ENCODE measurements at regions of chr3 and their contacts with region 1.

Region 1: DNA sequence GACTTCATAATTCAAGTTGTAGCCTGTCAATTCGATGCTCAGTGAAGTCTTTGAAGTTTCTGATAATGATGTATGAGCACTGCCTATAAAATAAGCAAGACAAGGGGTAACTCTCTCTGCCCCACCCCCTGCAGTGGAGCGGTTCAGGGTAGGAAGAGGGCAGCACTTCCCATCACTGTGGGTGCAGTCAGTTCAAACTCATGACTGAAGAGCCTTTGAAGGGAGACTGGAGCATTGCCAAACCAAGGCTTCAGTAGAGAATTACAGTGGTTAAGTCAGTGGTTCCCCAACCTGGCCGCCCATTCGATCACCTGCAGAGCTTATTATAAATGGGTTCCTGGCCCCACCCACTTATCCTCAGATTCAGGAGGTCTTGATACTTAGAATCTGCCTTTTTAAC is 190.6 kb downstream of the SHQ1 start:
- DNase-seq: no peak
- H3K4me3 ChIP-seq: no peak overlapping the region
- CTCF ChIP-seq: no peak
- POLR2A ChIP-seq: no peak

Region 2: DNA sequence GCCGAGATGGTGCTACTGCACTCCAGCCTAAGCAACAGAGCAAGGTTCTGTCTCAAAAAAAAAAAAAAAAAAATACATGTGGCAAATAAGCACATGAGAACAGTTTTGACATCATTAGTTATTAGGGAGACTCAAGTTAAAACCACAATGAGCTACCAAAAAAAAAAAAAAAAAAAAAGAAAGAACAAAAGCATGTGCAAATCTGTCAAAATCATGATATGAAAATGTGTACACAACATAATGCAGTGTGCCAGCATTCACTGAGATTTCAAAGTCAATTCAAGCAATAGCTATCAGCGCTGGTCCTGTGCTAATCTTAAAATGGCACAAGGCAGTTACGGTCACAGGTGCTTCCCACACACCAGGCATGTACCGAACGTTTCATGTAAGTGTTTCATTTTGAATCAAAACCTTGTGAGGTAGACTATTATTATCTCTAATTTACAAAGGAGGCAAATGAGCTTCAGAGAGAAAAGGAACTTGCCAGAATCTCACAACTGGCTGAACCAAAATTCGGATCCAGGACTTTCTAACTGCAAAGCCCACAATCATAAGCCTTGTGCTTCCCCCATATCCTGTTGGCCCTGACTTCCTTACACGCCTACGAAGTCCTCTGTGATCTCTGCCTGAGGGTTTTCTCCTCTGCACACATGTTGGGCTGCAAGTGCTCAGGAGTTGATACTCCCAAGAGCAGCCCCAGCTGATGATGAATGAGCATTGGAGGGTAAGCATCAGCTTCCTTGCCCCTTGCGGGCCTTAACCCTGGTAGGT is 672.6 kb before region 1 on chr3:
- intact Hi-C with region 1: loop called (anchors 5 kb)
- DNase-seq: no peak
- H3K4me3 ChIP-seq: no peak overlapping the region
- CTCF ChIP-seq: no peak
- POLR2A ChIP-seq: no peak

Region 3: DNA sequence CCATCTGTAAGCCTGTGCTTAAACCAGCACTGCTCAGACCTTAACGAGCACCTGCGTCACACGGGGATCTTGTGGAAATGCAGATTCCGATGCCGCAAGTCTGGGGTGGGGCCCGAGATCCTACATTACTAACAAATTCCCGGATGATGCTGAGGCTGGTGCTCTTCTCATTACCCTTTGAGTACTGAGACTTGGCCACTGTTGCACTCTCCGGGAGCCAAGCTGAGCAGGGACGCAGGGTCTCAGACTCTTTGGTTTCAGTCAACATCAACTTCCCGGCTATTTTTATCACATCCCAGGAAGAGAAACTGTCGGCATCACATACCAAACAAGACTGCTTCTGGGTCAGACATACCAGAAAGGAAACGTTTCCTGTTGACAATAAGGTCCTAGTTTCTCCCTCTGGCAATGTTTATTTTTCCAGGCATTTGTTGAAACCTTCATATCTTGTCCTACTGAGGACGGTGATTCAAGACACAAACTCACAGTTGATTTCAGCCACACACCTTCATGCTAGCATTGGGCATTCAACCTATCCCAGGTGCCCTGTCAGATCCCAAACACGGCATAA is 85.9 kb before region 1 on chr3:
- intact Hi-C with region 1: no loop called
- DNase-seq: no peak
- H3K4me3 ChIP-seq: no peak overlapping the region
- CTCF ChIP-seq: no peak
- POLR2A ChIP-seq: no peak